H1 (cell line): ENCODE measurements at regions of chr14 and their contacts with region 1.

Region 1: DNA sequence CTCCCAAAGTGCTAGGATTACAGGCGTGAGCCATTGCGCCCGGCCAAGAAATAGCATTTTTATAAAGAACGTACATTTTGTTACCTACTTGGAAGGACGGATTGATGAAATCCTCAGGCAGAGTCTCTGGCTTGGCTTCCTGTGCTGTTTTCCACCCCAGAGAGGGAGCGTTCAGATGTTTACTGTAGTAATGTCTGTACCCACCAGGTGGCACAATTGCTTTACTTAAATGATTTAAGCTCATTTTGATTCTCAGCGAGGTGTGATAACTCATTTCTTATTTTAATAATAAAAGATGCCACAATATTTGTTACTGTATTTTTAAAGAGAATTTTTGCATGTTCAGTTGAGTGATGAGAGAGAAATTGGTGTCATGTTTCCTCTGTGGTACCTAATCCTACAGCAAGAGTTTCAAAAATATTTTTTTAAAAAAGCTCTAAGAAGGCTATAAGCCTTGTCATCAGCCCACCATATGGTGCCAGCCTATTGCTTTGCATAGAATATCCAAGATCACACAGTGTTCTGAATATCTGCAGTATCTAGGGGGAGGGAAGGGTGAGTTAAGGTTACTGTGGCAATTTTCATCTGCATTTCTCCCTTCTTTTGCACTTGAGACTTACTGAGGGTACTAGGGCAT is 82.6 kb upstream of the TRAF3 start:
- DNase-seq: peak; percentile 36 to 65
- H3K4me3 ChIP-seq: no peak overlapping the region
- H3K27ac ChIP-seq: no peak overlapping the region
- H3K4me1 ChIP-seq: peaks cover 0 to 8% (median under 1%) of the 10 kb centered on the region in 4 experiments; a peak in 2 of 7 replicates
- H3K27me3 ChIP-seq: no peaks in the 10 kb centered on the region
- CTCF ChIP-seq: peak in 2 of 3 experiments; percentile 56 to 71; a peak in 2 of 4 replicates
- EP300 ChIP-seq: no peak
- POLR2A ChIP-seq: no peak
- RAD21 ChIP-seq: peak; percentile 76 to 80

Region 2: DNA sequence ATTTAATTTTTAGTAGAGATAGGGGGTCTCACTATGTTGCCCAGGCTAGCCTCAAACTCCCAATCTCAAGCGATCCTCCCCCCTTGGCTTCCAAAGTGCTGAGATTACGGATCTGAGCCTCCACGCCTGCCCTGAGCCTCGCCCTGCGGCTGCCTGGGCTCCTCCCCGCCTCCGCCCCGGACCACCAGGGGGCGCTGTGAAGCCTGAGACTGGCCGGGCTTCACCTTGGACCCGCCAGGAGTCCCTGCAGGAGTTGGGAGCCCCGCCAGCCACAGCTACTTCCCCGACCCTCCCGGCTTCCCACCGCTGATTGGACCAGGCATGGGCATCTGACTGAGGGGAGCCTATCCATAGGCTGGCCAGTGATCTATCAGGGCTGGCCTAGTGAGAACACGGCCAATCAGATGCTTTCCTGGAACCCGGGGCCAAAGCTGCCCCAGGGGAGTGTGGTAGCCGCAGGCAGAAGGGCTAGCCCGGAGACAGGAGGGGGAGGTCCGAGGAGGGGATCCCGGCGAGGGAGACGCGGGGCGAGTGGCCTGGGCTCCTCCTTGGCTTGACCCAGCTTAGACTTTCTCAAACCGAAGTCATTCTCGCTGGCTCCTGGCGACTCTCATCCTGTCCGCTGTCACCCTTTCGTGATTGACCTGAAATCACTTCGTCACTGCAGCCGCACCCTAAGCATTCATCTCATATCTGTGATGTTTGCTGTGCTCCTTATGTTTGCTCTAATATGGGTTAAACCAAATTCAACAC is 170.0 kb before region 1 on chr14:
- CTCF ChIA-PET with region 1: interaction called, 11 read pairs
- POLR2A ChIA-PET with region 1: no interaction called
- DNase-seq: peak; percentile 99 to 100
- H3K4me3 ChIP-seq: peak overlapping the region; percentile 33 to 67 (median 49); a peak in 7 of 8 replicates
- H3K27ac ChIP-seq: no peak overlapping the region
- H3K4me1 ChIP-seq: peaks cover 0 to 10% (median 0%) of the 10 kb centered on the region in 4 experiments; a peak in 2 of 7 replicates
- H3K27me3 ChIP-seq: no peaks in the 10 kb centered on the region
- CTCF ChIP-seq: peak; percentile 89 to 97 (median 91)
- EP300 ChIP-seq: no peak; a peak in 1 of 3 replicates
- POLR2A ChIP-seq: peak in 1 of 2 experiments; percentile 70; a peak in 2 of 3 replicates
- RAD21 ChIP-seq: peak; percentile 82 to 90

Region 3: GRCh38 chr14:102622262-102622885 is 72.3 kb before region 1 on chr14:
- CTCF ChIA-PET with region 1: interaction called, 10 read pairs
- POLR2A ChIA-PET with region 1: no interaction called
- DNase-seq: no peak
- H3K4me3 ChIP-seq: peak overlapping the region in 1 of 4 experiments; percentile 3; a peak in 1 of 8 replicates
- H3K27ac ChIP-seq: peak overlapping the region; percentile 19; the same call in 1 of the 2 replicates
- H3K4me1 ChIP-seq: peaks cover 0 to 13% (median 9%) of the 10 kb centered on the region in 4 experiments; a peak in 4 of 7 replicates
- H3K27me3 ChIP-seq: no peaks in the 10 kb centered on the region
- CTCF ChIP-seq: no peak
- EP300 ChIP-seq: no peak
- POLR2A ChIP-seq: no peak
- RAD21 ChIP-seq: no peak

Region 4: GRCh38 chr14:102723650-102724049 is 29.0 kb after region 1 on chr14:
- CTCF ChIA-PET with region 1: interaction called, 19 read pairs
- POLR2A ChIA-PET with region 1: no interaction called
- DNase-seq: no peak
- H3K4me3 ChIP-seq: no peak overlapping the region
- H3K27ac ChIP-seq: no peak overlapping the region
- H3K4me1 ChIP-seq: peaks cover 0 to 4% (median 1%) of the 10 kb centered on the region in 4 experiments; a peak in 3 of 7 replicates
- H3K27me3 ChIP-seq: no peaks in the 10 kb centered on the region
- CTCF ChIP-seq: no peak
- EP300 ChIP-seq: no peak
- POLR2A ChIP-seq: no peak
- RAD21 ChIP-seq: no peak

Region 5: GRCh38 chr14:102749393-102750305 is 55.0 kb after region 1 on chr14:
- CTCF ChIA-PET with region 1: interaction called, 15 read pairs
- POLR2A ChIA-PET with region 1: no interaction called
- DNase-seq: no peak
- H3K4me3 ChIP-seq: no peak overlapping the region
- H3K27ac ChIP-seq: no peak overlapping the region
- H3K4me1 ChIP-seq: peaks cover 0 to 9% (median 2%) of the 10 kb centered on the region in 4 experiments; a peak in 5 of 7 replicates
- H3K27me3 ChIP-seq: no peaks in the 10 kb centered on the region
- CTCF ChIP-seq: peak in 1 of 3 experiments; percentile 0; a peak in 1 of 4 replicates
- EP300 ChIP-seq: no peak
- POLR2A ChIP-seq: no peak
- RAD21 ChIP-seq: peak in 1 of 2 experiments; percentile 16; a peak in 1 of 4 replicates

Region 6: DNA sequence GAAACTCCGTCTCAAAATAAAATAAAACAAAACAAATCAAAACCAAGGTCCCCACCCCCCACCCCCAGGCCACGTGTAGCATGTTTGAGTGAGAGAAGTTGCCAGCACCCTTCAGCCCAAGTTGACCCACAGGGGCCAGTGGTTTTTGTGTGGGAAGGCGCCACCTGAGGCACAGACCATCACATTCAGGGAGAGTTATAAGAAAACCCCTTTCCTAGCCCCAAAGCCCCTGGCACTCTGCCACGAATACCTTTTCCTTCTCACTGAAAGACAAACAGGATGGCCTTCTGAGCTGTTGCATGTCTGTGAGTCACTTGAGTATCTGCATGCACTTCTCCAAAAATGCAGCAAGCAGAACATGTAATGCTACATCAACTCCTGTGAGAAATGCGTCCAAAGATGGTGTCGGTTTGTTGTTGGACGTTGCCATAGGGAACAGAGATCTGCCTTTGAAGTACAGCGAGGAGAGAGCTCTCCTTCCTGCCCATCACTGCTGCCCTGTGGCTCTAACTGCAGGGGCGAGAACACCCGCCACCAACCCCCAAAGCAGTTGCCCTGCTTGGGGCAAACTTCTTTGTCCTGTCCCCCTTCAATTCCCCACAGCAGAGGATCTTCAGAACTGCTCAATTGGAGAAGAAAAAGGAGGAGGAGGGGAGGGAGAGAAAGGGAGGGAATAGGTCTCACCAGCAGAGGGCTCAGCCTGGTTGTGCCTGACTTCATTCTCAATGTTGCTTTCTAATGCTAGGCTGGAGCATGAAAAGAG is 79.9 kb after region 1 on chr14:
- CTCF ChIA-PET with region 1: interaction called, 63 read pairs
- POLR2A ChIA-PET with region 1: interaction called, 4 read pairs
- DNase-seq: peak; percentile 49 to 60
- H3K4me3 ChIP-seq: no peak overlapping the region
- H3K27ac ChIP-seq: no peak overlapping the region
- H3K4me1 ChIP-seq: peaks cover 3 to 13% (median 10%) of the 10 kb centered on the region in 4 experiments
- H3K27me3 ChIP-seq: peaks cover 0 to 10% (median 8%) of the 10 kb centered on the region in 4 experiments; a peak in 5 of 7 replicates
- CTCF ChIP-seq: peak; percentile 71 to 83 (median 73)
- EP300 ChIP-seq: no peak
- POLR2A ChIP-seq: no peak
- RAD21 ChIP-seq: peak; percentile 63 to 69

Region 7: DNA sequence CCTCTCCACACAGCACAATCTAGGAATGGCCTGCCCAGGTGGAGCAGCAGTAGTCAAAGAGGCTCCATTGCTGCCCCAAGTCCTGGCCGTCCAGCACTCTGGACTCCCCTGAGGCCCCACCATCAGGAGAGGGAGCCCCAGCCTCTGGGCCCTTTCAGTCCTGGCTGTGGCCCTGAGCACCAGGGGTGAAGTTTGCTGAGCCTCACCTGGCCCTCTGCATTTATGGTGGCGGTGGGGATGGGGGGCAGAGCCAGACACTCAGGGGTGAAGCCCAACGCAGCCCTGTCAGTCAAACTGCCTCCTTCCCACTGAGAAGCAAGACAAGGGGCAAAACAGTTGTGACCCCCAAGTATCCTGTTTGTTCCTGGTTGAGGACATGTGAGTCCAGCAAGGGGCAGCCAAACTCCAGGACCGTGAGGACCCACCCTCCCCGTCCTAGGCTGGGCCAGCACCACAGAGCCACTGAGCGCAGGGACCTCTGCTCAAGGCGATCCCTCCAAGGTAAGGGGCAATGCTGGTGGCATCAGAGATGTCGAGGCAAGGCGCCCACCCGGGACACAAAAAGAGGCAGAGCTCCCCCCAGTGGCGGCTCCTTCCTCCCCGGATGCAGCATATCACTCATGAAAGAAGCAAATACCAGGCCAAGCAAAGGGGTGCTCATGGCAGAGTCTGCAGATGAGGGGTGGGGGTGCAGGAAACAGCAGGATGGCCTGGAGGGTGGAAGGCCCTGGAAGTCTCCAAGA is 223.0 kb after region 1 on chr14:
- CTCF ChIA-PET with region 1: interaction called, 16 read pairs
- POLR2A ChIA-PET with region 1: no interaction called
- DNase-seq: peak; percentile 38 to 92
- H3K4me3 ChIP-seq: no peak overlapping the region
- H3K27ac ChIP-seq: no peak overlapping the region
- H3K4me1 ChIP-seq: peaks cover 0 to 3% (median 0%) of the 10 kb centered on the region in 4 experiments; a peak in 3 of 7 replicates
- H3K27me3 ChIP-seq: peaks cover 0 to 10% (median 9%) of the 10 kb centered on the region in 4 experiments; a peak in 5 of 7 replicates
- CTCF ChIP-seq: peak in 2 of 3 experiments; percentile 83 to 87; a peak in 3 of 4 replicates
- EP300 ChIP-seq: no peak
- POLR2A ChIP-seq: no peak
- RAD21 ChIP-seq: peak; percentile 90 to 94